IMR-90 (cell line): ENCODE measurements at regions of chr14 and their contacts with region 1.

Region 1: GRCh38 chr14:74302634-74303577 is at the start of gene ABCD4:
- DNase-seq: peak; percentile 87
- ATAC-seq: peak; percentile 99
- H3K4me3 ChIP-seq: peak within 1 kb of the TSS; percentile 84
- H3K27ac ChIP-seq: peak within 1 kb of the TSS; percentile 76
- H3K4me1 ChIP-seq: peaks cover 3% of the 10 kb centered on the region
- H3K27me3 ChIP-seq: no peaks in the 10 kb centered on the region
- CTCF ChIP-seq: peak; percentile 59
- POLR2A ChIP-seq: peak; percentile 80
- RAD21 ChIP-seq: no peak
- total RNA-seq, gene ABCD4: 8.9 and 12.2 TPM in 2 replicates

Region 2: GRCh38 chr14:73662487-73662943 is 640.4 kb before region 1 on chr14:
- CTCF ChIA-PET with region 1: no interaction called
- POLR2A ChIA-PET with region 1: no interaction called
- dilution Hi-C with region 1: no loop called
- in situ Hi-C with region 1: no loop called
- intact Hi-C with region 1: no loop called
- DNase-seq: peak; percentile 94
- ATAC-seq: peak; percentile 97
- H3K4me3 ChIP-seq: no peak overlapping the region
- H3K27ac ChIP-seq: no peak overlapping the region
- H3K4me1 ChIP-seq: no peaks in the 10 kb centered on the region
- H3K27me3 ChIP-seq: no peaks in the 10 kb centered on the region
- CTCF ChIP-seq: peak; percentile 75
- POLR2A ChIP-seq: no peak
- RAD21 ChIP-seq: peak; percentile 59

Region 3: DNA sequence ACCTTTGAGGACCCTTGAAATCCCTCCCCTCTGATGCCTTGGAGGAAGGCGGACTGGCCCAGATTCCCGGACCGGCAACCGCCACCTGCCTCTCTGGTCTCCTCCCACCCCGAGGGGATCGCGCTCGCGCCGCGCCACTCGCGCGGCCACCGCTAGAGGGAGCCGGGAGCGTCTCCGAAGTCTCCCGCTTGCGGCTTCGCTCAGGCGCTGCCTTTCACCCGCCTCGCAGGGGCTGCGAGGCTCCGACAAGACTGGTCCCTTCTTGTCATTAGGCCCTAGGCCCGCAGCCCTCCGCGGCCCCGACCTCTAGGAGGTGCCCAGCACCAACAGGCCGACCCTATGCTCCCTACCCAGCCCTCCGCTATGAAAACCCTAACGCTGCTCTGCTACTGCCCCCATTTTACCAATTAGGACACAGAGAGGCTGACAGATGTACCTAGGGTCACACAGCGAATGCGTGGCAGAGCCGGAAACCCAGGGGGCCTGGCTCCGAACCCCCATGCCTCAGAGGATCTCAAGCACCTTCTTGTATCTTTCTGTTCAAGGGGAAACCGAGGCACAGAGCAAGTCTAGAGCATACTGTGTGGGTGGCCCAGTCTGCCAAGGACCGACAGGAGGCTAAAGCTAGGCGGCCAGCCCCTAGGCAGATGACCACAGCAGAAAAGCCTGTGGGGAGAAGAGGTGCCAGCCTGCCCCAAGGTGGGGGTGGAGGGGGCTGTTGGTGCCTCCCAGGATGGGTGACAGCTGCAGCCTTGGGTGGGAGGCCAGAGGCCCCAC is 85.0 kb before region 1 on chr14:
- CTCF ChIA-PET with region 1: no interaction called
- POLR2A ChIA-PET with region 1: no interaction called
- dilution Hi-C with region 1: no loop called
- in situ Hi-C with region 1: no loop called
- intact Hi-C with region 1: no loop called
- DNase-seq: peak; percentile 46
- ATAC-seq: peak; percentile 100
- H3K4me3 ChIP-seq: no peak overlapping the region
- H3K27ac ChIP-seq: no peak overlapping the region
- H3K4me1 ChIP-seq: no peaks in the 10 kb centered on the region
- H3K27me3 ChIP-seq: peaks cover 56% of the 10 kb centered on the region
- CTCF ChIP-seq: peak; percentile 87
- POLR2A ChIP-seq: no peak
- RAD21 ChIP-seq: peak; percentile 57

Region 4: GRCh38 chr14:74290415-74290814 is 12.5 kb before region 1 on chr14:
- CTCF ChIA-PET with region 1: no interaction called
- POLR2A ChIA-PET with region 1: interaction called, 11 read pairs
- dilution Hi-C with region 1: no loop called
- in situ Hi-C with region 1: no loop called
- intact Hi-C with region 1: no loop called
- DNase-seq: peak; percentile 19
- ATAC-seq: no peak; the same call in 1 of the 2 replicates
- H3K4me3 ChIP-seq: no peak overlapping the region
- H3K27ac ChIP-seq: no peak overlapping the region
- H3K4me1 ChIP-seq: no peaks in the 10 kb centered on the region
- H3K27me3 ChIP-seq: no peaks in the 10 kb centered on the region
- CTCF ChIP-seq: peak; percentile 41
- POLR2A ChIP-seq: no peak
- RAD21 ChIP-seq: no peak